ENCODE measurements at regions of chr16 and their contacts with region 1.

Region 1: DNA sequence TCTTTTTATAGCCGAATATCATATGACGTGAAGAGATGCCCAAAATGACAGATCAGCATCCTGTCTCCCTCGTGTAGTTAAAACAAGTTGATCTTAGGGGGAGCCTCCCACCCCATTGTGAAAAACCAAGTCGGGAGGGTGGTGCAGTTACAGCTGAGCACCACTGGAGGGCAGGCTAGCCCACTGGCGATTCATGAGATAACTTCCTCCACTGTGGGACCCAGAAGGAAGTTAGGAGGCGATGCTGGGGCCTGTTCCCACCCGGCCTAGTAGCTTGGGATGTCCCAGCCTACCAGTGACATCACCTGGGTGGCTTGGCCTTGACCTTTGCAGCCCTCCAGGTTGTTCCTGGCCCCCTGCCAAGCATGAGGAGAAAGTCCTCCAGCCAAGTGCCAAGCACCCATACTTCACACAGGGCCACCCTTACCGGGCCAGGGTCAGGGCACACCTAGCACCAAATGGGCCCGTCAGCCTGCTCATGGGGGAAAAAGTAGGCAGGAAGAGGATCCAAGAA is 8.1 kb upstream of the CPNE2 start:
- DNase-seq: peak; percentile 56 to 90 (median 70)
- ATAC-seq: peak; percentile 96
- H3K4me3 ChIP-seq: no peak overlapping the region
- H3K4me3 Mint-ChIP-seq: no peak overlapping the region
- H3K27ac ChIP-seq: peak overlapping the region; percentile 43 to 57
- H3K27ac Mint-ChIP-seq: peak overlapping the region; percentile 84
- H3K4me1 ChIP-seq: peaks cover 11% of the 10 kb centered on the region
- H3K4me1 Mint-ChIP-seq: peaks cover 12% of the 10 kb centered on the region
- H3K27me3 ChIP-seq: no peaks in the 10 kb centered on the region
- H3K27me3 Mint-ChIP-seq: no peaks in the 10 kb centered on the region
- CTCF ChIP-seq: peak; percentile 92

Region 2: GRCh38 chr16:56600398-56600999 is 483.8 kb before region 1 on chr16:
- CTCF ChIA-PET with region 1: no interaction called
- POLR2A ChIA-PET with region 1: no interaction called
- intact Hi-C with region 1: no loop called
- DNase-seq: peak in 5 of 14 experiments; percentile 28 to 68 (median 53)
- ATAC-seq: peak; percentile 46
- H3K4me3 ChIP-seq: no peak overlapping the region
- H3K4me3 Mint-ChIP-seq: no peak overlapping the region
- H3K27ac ChIP-seq: no peak overlapping the region
- H3K27ac Mint-ChIP-seq: no peak overlapping the region
- H3K4me1 ChIP-seq: no peaks in the 10 kb centered on the region
- H3K4me1 Mint-ChIP-seq: no peaks in the 10 kb centered on the region
- H3K27me3 ChIP-seq: peaks cover 0 to 7% of the 10 kb centered on the region in 2 experiments
- H3K27me3 Mint-ChIP-seq: no peaks in the 10 kb centered on the region
- CTCF ChIP-seq: no peak

Region 3: DNA sequence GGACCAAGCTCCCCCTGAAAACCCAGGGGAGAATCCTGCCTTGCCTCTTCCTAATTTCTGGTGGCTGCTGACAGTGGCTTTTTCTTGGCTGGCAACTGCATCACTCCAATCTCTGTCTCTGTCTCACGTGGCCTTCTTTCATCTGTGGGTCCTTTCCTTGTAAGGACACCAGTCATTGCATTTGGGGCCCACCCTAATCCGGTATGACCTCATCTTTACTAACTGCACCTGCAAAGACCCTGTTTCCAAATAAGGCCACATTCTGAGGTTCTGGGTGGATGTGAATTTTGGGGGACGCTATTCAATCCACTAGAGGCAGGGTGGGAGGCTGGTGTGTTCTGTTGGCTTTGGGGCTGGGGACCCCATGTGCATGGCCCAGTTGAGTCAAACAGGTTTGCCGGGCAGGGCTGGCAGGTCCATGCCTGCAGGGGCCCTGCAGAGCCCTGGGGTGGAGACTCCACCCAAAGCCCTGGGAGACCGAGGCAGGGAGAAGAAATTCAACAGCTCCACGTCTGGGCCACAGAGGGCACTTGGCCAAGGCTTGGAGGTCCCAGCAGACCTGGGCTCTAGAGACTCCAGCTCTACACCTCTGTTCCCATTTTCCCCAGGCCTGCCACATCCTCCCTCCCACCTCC is 208.1 kb before region 1 on chr16:
- CTCF ChIA-PET with region 1: no interaction called
- POLR2A ChIA-PET with region 1: no interaction called
- intact Hi-C with region 1: no loop called
- DNase-seq: no peak
- ATAC-seq: no peak
- H3K4me3 ChIP-seq: no peak overlapping the region
- H3K4me3 Mint-ChIP-seq: no peak overlapping the region
- H3K27ac ChIP-seq: no peak overlapping the region
- H3K27ac Mint-ChIP-seq: no peak overlapping the region
- H3K4me1 ChIP-seq: no peaks in the 10 kb centered on the region
- H3K4me1 Mint-ChIP-seq: no peaks in the 10 kb centered on the region
- H3K27me3 ChIP-seq: no peaks in the 10 kb centered on the region
- H3K27me3 Mint-ChIP-seq: no peaks in the 10 kb centered on the region
- CTCF ChIP-seq: no peak

Region 4: DNA sequence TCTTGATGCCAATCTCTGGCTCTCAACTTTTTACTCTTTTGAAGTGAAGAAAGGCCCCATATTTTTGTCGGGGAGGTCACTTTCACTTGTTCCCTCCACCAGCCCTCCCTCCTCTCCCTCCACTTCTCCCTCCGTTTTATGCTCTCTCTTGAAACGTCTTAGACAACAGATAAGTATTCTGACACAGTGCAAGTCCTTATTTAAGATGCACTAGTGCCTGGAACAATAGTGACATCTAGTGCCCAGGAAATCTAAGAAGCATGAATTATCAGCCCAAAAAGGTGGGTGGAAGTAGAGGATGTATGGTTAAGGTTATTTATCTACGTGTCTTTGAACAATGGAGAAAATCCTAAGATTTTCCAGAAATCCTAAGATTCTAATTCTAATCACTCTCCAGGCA is 83.6 kb after region 1 on chr16:
- CTCF ChIA-PET with region 1: interaction called, 10 read pairs
- POLR2A ChIA-PET with region 1: interaction called, 4 read pairs
- intact Hi-C with region 1: loop called (anchors 1 kb)
- DNase-seq: peak in 4 of 14 experiments; percentile 24 to 84 (median 80)
- ATAC-seq: peak; percentile 98
- H3K4me3 ChIP-seq: no peak overlapping the region
- H3K4me3 Mint-ChIP-seq: no peak overlapping the region
- H3K27ac ChIP-seq: no peak overlapping the region
- H3K27ac Mint-ChIP-seq: no peak overlapping the region
- H3K4me1 ChIP-seq: peaks cover 5% of the 10 kb centered on the region
- H3K4me1 Mint-ChIP-seq: peaks cover 27% of the 10 kb centered on the region
- H3K27me3 ChIP-seq: no peaks in the 10 kb centered on the region
- H3K27me3 Mint-ChIP-seq: no peaks in the 10 kb centered on the region
- CTCF ChIP-seq: peak; percentile 75

Region 5: GRCh38 chr16:57413301-57413730 is 329.0 kb after region 1 on chr16:
- CTCF ChIA-PET with region 1: no interaction called
- POLR2A ChIA-PET with region 1: no interaction called
- intact Hi-C with region 1: loop called (anchors 2 to 10 kb)
- DNase-seq: no peak
- ATAC-seq: no peak
- H3K4me3 ChIP-seq: no peak overlapping the region
- H3K4me3 Mint-ChIP-seq: no peak overlapping the region
- H3K27ac ChIP-seq: no peak overlapping the region
- H3K27ac Mint-ChIP-seq: no peak overlapping the region
- H3K4me1 ChIP-seq: peaks cover 16% of the 10 kb centered on the region
- H3K4me1 Mint-ChIP-seq: peaks cover 7% of the 10 kb centered on the region
- H3K27me3 ChIP-seq: no peaks in the 10 kb centered on the region
- H3K27me3 Mint-ChIP-seq: no peaks in the 10 kb centered on the region
- CTCF ChIP-seq: no peak